HepG2 (cell line): ENCODE measurements at regions of chr1 and their contacts with region 1.

Region 1: DNA sequence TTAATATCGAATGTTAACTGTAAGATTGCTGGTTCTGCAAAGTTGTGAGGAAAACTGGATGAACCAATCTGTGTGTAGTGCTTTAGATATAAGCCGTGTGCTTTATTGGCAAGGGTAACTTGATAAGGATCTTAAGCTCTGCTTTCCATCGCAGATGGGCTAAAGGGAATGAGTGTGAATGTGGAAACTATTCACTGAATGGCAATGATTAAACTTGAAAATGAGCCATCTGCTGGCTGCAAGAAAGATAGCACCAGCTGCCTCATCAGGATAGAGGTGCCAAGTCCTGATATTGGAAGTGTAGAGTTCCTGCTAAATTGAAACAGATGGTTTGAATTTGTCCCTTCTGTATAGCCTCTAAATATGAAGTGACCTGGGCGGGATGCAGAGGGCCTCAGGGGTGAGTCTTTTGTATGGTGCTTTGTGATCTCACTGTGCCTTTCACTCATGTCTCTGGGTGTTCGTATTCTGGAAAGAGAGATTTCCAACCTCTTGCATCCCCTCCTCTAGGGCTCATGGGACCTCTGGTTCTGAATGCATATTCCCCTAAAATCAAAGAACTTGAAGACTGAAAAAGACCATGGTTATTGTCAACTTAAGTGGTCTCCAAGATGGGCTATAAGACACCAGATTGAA is 9.2 kb downstream of the FCRL3 start:
- DNase-seq: peak; percentile 7
- ATAC-seq: peak; percentile 82
- H3K4me3 ChIP-seq: no peak overlapping the region
- H3K27ac ChIP-seq: no peak overlapping the region
- H3K4me1 ChIP-seq: no peaks in the 10 kb centered on the region
- H3K27me3 ChIP-seq: no peaks in the 10 kb centered on the region
- CTCF ChIP-seq: peak; percentile 54
- EP300 ChIP-seq: no peak
- POLR2A ChIP-seq: no peak
- RAD21 ChIP-seq: no peak

Region 2: DNA sequence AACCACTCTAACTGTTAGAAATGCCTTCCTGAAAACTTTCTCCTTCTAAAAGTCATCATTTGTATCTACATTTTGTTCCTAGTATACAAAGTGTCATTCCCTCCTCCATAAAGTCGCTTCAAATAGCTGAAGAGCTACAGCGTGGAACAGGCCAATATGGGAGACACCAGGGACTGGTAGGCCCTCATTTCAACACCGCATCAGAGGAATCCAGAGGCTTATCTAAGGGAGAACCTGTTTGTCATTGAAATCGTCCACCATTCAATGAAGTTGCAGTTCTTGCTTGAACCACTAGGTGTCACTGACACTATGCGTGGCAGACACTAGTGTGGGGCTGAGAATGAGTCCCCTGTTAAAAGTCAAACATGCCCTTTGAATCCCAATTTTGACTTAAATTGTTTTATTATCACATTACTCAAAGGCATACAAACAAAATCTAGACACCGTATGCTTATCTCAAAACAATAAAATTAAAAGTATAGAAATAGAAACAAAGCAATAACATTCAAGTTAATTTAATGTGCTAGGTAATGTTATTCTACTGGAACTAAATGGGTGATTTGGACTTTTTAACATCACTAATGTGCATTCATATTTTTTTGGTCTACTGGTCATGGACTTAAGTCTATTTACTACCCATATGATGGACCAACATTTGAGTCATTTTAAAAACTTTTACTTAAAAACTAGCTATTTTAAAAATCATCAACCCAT is 321.4 kb before region 1 on chr1:
- CTCF ChIA-PET with region 1: no interaction called
- POLR2A ChIA-PET with region 1: no interaction called
- in situ Hi-C with region 1: no loop called
- intact Hi-C with region 1: loop called (anchors 10 kb)
- DNase-seq: peak; percentile 52
- ATAC-seq: peak; percentile 89
- H3K4me3 ChIP-seq: no peak overlapping the region
- H3K27ac ChIP-seq: no peak overlapping the region
- H3K4me1 ChIP-seq: peaks cover 7% of the 10 kb centered on the region; the same call in 1 of the 2 replicates
- H3K27me3 ChIP-seq: no peaks in the 10 kb centered on the region
- CTCF ChIP-seq: peak; percentile 82
- EP300 ChIP-seq: no peak
- POLR2A ChIP-seq: no peak
- RAD21 ChIP-seq: peak; percentile 45; the same call in 1 of the 2 replicates

Region 3: GRCh38 chr1:157580179-157580827 is 111.1 kb before region 1 on chr1:
- CTCF ChIA-PET with region 1: no interaction called
- POLR2A ChIA-PET with region 1: no interaction called
- in situ Hi-C with region 1: no loop called
- intact Hi-C with region 1: loop called (anchors 1 kb)
- DNase-seq: peak; percentile 63
- ATAC-seq: peak; percentile 71
- H3K4me3 ChIP-seq: no peak overlapping the region
- H3K27ac ChIP-seq: no peak overlapping the region
- H3K4me1 ChIP-seq: no peaks in the 10 kb centered on the region
- H3K27me3 ChIP-seq: no peaks in the 10 kb centered on the region; a peak in 1 of 5 replicates
- CTCF ChIP-seq: peak; percentile 70
- EP300 ChIP-seq: no peak
- POLR2A ChIP-seq: no peak
- RAD21 ChIP-seq: no peak

Region 4: DNA sequence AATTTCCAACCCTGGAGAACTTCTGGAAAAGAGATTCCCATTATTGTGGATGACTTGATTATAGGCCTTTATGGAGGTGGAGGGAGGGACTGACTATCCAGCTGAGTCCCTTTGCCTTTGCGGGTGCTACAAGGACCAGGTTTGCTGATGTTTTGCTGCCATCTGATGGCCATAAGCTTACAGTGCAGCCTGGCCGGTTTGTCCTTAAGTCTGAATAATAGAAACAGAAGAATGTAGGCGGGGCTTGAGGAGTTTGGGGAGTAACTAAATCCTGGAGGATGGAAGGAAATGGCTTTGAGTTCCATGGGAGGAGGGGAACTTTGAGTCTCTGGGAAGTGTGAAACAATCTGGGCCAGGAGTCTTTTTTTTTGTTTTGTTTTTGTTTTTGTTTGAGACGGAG is 433.6 kb after region 1 on chr1:
- CTCF ChIA-PET with region 1: no interaction called
- POLR2A ChIA-PET with region 1: no interaction called
- in situ Hi-C with region 1: no loop called
- intact Hi-C with region 1: no loop called
- DNase-seq: peak; percentile 66
- ATAC-seq: peak; percentile 91
- H3K4me3 ChIP-seq: no peak overlapping the region
- H3K27ac ChIP-seq: no peak overlapping the region
- H3K4me1 ChIP-seq: no peaks in the 10 kb centered on the region
- H3K27me3 ChIP-seq: no peaks in the 10 kb centered on the region
- CTCF ChIP-seq: peak; percentile 83
- EP300 ChIP-seq: no peak
- POLR2A ChIP-seq: no peak
- RAD21 ChIP-seq: peak; percentile 68